ENCODE measurements at regions of chr14 and their contacts with region 1.

Region 1: GRCh38 chr14:73418227-73418626 is 40.1 kb downstream of the NUMB start:
- DNase-seq: no peak
- ATAC-seq: no peak
- H3K4me3 ChIP-seq: no peak overlapping the region
- H3K27ac ChIP-seq: no peak overlapping the region
- H3K4me1 ChIP-seq: peaks cover 0 to 34% (median 7%) of the 10 kb centered on the region in 12 donors
- H3K27me3 ChIP-seq: no peaks in the 10 kb centered on the region
- CTCF ChIP-seq: no peak
- POLR2A ChIP-seq: no peak

Region 2: DNA sequence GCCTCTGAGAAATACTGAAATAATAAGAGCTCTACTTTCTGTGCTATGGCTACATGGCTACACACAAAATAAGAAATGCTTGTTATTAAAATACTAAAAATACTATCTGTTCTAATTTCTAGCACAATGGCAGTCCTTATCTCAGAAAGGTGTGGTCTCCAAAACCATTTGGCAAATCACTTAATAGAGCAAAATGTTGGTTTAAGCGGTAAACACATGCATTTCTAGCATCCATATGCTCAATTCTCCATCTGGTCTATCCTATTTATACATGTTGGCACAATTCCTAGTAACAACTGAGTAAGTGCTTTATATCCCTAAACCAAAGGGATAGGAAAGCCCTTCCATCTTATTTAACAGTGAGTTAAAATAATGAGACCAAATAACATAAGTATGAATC is 73.9 kb before region 1 on chr14:
- intact Hi-C with region 1: no loop called
- DNase-seq: no peak
- ATAC-seq: peak in 2 of 4 donors; percentile 10 to 59
- H3K4me3 ChIP-seq: no peak overlapping the region
- H3K27ac ChIP-seq: peak overlapping the region in 2 of 12 donors; percentile 13 to 41
- H3K4me1 ChIP-seq: peaks cover 0 to 22% (median 4%) of the 10 kb centered on the region in 12 donors
- H3K27me3 ChIP-seq: no peaks in the 10 kb centered on the region
- CTCF ChIP-seq: no peak
- POLR2A ChIP-seq: no peak

Region 3: DNA sequence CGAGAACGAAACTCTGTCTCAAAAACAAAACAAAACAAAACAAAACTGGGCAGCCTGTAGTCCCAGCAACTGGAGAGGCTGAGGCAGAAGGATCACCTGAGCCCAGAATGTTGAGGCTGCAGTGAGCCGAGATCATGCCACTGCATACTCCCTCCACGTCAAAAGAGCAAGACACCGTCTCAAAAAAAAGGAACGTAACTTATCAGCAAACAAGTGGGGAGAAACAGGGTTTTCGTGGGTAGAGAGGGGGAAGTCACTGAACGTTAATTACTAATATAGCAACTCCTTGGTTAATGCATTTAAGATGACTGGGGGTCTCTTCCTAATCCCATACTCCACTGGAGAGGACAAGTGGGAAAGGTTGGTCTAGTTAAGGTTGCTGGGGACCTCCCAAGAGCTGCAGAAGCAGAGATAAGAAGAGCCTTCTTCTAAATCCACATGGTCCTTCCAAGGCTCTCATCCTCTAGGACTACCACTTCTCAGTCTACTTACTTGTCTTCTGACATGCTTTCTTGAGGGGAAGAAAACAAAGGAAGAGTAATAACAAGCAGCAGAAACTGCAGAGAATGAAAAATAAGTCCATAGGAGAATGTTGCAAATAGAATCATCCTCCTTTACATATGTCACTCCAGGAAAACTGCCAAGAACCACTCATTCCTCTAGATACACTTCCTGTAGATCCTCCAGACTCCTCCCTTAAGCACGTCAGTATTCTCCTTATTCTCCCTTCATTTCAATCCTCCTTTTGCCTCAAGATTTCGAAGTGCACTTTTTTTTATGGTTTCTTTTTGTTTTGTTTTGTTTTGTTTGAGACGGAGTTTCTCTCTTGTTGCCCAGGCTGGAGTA is 34.3 kb after region 1 on chr14:
- intact Hi-C with region 1: loop called in 2 of 10 experiments (anchors 5 kb)
- DNase-seq: no peak
- ATAC-seq: no peak
- H3K4me3 ChIP-seq: no peak overlapping the region
- H3K27ac ChIP-seq: peak overlapping the region in 2 of 12 donors; percentile 10 to 43
- H3K4me1 ChIP-seq: peaks cover 0 to 55% (median 24%) of the 10 kb centered on the region in 12 donors
- H3K27me3 ChIP-seq: no peaks in the 10 kb centered on the region
- CTCF ChIP-seq: no peak
- POLR2A ChIP-seq: no peak